GM10248 (cell line): ENCODE measurements at regions of chr9 and their contacts with region 1.

Region 1: DNA sequence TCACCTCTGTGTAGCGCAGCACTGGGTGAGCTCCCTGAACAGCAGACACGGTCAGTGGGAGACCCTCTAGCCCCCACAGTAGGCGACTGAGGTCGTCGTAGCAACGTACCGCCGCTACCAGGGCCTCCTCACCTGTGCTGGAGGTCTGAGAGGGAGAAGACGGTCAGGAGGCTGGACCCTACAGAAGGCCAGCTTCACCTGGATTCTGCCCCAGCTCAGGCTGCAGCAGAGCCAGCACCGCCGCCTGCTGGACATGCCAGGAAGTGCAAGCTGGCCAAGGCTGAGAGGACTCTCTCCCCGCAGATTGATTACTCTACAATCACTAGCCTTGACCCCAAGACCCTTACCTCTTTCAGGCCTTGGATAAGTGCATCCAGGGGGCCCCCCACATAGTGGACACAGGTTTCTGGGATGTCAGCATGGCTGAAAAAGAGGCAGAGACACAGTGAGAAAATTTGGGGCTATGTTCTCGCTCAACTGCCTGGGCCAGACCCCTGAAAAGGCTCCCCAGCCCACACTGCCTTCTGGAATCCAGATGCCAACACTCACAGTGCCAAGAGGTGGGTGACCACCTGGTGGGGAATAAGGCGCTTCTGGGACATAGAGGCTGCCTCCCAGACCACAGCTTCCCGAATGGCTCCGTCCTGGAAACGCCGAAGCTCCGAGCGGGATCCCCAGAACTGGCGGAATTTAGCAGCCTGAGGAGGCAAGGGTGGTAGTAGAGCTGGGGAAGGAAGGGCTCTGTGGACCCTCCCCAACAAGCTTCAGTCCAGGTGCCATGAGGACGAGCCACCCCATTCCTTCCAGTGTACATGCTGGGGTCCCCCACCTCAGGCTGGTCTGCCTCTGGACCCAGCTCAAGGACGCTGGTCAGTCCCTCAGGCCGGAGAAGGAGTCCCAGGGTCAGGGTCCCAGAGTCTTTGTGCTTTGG is 6.9 kb downstream of the NOL6 start:
- DNase-seq: peak; percentile 83
- CTCF ChIP-seq: peak; percentile 94

Region 2: GRCh38 chr9:33404788-33405362 is 62.0 kb before region 1 on chr9:
- CTCF ChIA-PET with region 1: interaction called, 58 read pairs
- POLR2A ChIA-PET with region 1: no interaction called
- DNase-seq: no peak
- CTCF ChIP-seq: no peak

Region 3: DNA sequence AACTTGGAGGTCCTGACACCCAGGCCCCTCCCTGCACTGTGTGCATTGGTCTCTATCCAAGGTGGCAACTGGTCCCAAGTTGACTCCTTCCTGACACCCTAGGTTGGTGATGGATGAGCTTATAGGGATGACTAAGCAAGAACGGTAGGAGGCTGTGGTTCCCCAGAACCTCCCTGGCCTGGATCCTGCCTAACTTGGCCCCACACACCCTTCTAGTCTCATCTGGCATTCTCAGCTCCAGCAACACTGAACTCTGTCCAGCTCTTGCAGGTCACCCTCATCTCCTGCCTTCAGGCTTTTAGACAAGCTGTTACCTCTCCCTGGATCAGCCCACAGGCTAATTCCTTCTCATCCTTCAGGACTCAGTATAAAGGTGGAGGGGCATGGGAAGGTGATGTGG is 35.9 kb before region 1 on chr9:
- CTCF ChIA-PET with region 1: interaction called, 13 read pairs
- POLR2A ChIA-PET with region 1: no interaction called
- DNase-seq: no peak
- CTCF ChIP-seq: no peak

Region 4: DNA sequence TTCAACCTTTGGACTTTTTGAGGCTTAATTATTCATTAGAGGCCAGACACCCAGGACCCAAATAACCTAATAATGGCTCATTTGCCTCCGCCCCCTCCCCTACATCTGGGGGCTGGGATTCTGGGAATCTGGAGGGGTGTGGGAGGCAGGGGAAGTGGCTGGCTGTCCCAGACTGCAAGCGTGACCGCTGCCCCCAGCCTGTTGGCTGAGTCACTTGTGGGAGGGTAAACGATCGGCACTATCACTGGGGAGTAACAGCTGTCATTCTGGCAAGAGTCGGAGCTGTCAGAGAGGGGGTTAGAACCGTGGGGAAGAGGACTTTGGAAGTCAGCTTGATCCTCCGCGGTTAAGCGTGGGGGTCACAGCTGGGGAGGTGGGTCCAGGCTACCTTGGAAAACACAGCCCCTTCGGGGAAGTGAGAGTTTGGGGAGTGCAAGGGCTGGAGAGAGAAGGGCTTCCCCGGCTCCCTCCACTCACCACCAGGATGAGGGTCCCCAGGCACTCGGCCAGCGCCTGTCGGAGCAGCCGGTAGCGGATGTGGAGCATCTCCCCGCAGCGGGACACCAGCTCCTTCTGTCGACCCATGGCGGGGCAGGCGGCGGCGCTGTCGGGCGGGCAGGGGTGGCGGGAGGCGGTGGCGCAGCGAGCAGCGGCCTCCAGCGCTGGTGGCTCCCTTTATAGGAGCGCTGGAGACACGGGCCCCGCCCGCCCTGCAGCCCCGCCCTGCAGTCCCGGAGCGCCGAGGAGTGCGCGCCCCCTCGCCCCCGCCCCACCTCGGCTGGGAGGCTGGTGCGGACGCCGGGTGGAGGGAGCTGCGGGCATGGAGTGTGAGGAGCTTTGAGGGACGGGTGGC is 19.7 kb before region 1 on chr9 and contains the start of gene AQP3:
- CTCF ChIA-PET with region 1: interaction called, 174 read pairs
- POLR2A ChIA-PET with region 1: interaction called, 4 read pairs
- DNase-seq: peak; percentile 65
- CTCF ChIP-seq: peak; percentile 22